ENCODE measurements at regions of chr17 and their contacts with region 1.

Region 1: DNA sequence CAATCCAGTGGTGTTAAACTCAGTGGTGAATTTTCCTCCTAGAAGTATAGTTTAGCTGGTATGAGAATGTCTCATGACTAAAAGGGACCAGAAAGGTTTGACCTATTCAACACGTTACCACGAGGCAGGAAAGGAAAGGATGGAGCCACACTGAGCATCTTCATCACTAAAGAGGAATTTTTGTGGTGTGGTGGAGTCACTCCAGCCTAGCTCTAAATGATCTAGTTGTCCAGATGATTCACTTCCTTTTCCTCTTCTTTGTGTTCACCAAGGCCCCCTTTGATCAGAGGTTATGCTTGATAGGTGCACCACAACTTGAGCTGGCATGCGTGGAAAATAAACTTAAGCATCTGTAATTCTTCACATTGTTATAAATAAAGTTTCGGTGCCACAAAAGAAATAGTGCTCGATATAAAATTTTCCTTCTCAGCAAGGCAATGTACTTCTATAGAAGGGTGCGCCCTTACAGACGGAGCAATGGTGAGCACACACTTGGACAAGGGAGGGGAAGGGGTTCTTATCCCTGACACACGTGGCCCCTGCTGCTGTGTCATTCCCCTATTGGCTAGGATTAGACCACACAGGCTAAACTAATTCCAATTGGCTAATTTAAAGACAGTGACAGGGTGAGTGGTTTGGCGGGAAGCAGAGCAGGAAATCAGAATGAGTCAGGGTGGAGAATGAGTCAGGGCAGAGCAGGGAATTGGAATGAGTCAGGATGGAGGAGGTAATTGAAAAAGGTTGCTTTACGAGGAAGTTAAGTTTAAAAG is 254.5 kb downstream of the HS3ST3A1 start:
- DNase-seq: peak; percentile 58
- H3K4me3 Mint-ChIP-seq: no peak overlapping the region
- H3K27ac Mint-ChIP-seq: peak overlapping the region; percentile 38
- H3K4me1 Mint-ChIP-seq: peaks cover 16% of the 10 kb centered on the region
- H3K27me3 Mint-ChIP-seq: peaks cover 9% of the 10 kb centered on the region

Region 2: DNA sequence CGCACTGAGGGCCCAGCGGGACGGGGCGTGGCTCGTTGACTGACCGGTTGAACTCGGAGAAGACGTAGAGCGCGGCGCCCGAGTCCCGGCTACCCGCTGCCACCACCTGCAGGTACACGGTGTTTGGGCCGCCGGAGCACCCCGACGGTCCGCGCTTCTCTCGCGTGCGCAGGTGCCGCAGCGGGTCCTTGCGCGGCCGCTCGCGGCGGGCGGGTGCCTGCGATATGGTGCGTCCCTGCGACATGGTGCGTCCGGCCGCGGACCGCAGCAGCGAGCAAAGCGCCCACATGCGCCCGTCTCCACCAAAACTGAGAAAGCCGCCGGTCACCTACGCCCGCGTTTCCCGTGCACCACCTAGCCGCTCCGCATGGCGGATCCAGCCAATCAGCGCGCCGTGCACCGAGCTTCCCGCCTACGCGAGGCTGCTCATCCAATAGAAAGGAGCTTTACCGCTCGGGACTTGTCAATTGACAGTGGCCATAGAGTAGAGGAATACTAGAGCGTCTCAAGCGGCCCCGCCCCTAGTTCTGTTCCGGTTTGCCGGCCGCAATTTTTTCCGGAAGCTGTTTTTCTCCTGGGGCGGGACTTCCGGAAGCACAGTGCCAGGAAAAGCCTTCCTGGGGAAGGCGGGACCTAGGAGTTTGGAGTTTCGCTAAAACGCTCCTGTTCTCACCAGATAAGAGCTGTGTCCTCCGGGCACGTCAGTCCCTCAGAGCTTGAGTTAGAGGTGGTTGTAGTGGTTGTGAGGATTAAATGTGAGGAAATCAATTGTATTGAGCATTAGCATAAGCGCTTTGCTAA is 329.3 kb before region 1 on chr17 and contains the start of gene ELAC2:
- CTCF ChIA-PET with region 1: no interaction called
- POLR2A ChIA-PET with region 1: no interaction called
- intact Hi-C with region 1: loop called (anchors 5 kb)
- DNase-seq: peak; percentile 97
- H3K4me3 Mint-ChIP-seq: peak within 1 kb of the TSS; percentile 94
- H3K27ac Mint-ChIP-seq: peak within 1 kb of the TSS; percentile 97
- H3K4me1 Mint-ChIP-seq: peaks cover 26% of the 10 kb centered on the region
- H3K27me3 Mint-ChIP-seq: no peaks in the 10 kb centered on the region
- total RNA-seq, gene ELAC2: 63.1 to 64.2 TPM

Region 3: GRCh38 chr17:13244513-13244912 is 102.7 kb before region 1 on chr17:
- CTCF ChIA-PET with region 1: no interaction called
- POLR2A ChIA-PET with region 1: no interaction called
- intact Hi-C with region 1: no loop called
- DNase-seq: no peak
- H3K4me3 Mint-ChIP-seq: no peak overlapping the region
- H3K27ac Mint-ChIP-seq: no peak overlapping the region
- H3K4me1 Mint-ChIP-seq: no peaks in the 10 kb centered on the region
- H3K27me3 Mint-ChIP-seq: peaks cover 7% of the 10 kb centered on the region

Region 4: DNA sequence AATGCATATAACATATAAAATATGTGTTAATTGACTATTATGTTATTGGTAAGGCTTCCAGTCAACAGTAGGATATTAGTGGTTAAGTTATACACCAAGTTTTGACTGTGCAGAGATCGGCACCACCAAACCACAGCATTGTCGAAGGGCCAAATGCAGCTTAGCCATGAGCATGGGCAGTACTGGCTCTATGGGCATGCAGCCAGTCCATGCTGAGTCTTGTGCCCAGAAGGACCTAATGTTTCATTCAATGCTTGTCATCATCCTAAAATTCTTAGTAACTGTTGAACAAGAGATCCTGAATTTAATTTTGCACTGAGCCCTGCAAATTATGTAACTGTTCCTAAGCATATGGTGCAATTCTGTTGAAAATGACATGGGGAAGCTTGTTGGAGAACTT is 488.0 kb after region 1 on chr17:
- CTCF ChIA-PET with region 1: no interaction called
- POLR2A ChIA-PET with region 1: no interaction called
- intact Hi-C with region 1: no loop called
- DNase-seq: no peak
- H3K4me3 Mint-ChIP-seq: no peak overlapping the region
- H3K27ac Mint-ChIP-seq: no peak overlapping the region
- H3K4me1 Mint-ChIP-seq: peaks cover 2% of the 10 kb centered on the region
- H3K27me3 Mint-ChIP-seq: no peaks in the 10 kb centered on the region

Measured in activated CD4-positive, alpha-beta memory T cell treated with anti-CD3 and anti-CD28 coated beads for 36 hours (primary cell).